ENCODE measurements at regions of chr19 and their contacts with region 1.

Region 1: GRCh38 chr19:55088543-55089341 is 13.1 kb downstream of the EPS8L1 start:
- DNase-seq: no peak
- ATAC-seq: peak in 1 of 2 donors; percentile 29
- H3K4me3 ChIP-seq: no peak overlapping the region
- H3K27ac ChIP-seq: peak overlapping the region in 3 of 4 donors; percentile 16 to 33 (median 18)
- H3K4me1 ChIP-seq: peaks cover 13 to 24% of the 10 kb centered on the region in 2 donors
- H3K27me3 ChIP-seq: peaks cover 36 to 39% (median 39%) of the 10 kb centered on the region in 3 donors
- CTCF ChIP-seq: peak; percentile 18 to 89 (median 52)
- POLR2A ChIP-seq: no peak

Region 2: DNA sequence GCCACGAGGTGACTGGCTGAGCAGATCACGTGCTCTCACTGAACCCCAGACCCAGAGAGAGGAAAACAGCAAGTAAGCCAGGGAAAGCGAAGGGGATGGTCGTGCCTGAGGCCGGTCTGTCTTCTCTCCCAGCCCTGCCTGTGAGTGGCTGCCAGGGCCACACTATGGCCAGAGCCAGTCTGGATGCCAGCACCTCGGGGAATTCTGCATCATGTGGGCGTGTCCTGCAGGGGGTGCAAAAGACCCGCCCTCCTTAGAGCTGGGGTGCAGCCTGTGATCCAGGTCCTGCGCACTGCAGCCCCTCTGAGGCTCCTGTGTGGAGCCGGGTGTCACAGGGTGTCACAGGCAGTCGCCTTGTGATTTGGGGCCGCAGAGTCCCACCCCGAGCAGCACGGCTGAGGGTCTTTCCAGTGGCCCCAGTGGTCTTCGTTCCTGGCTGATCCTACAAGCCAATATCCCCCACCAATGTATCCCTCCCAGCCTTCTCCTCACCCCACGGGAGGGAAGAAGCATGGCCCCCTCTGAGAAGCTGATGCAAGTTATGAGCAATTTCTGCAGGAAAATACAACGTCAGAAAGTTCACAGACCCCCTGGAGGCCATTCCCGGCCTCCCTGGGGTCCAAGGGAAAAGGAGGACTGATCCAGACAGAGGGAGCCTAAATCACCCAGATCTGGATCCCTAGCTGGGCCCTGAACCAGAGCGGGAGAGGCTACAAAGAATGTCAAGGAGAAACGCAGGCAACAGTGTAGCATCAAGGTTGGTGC is 21.0 kb after region 1 on chr19:
- in situ Hi-C with region 1: no loop called
- intact Hi-C with region 1: no loop called
- DNase-seq: no peak
- ATAC-seq: no peak
- H3K4me3 ChIP-seq: no peak overlapping the region
- H3K27ac ChIP-seq: no peak overlapping the region
- H3K4me1 ChIP-seq: peaks cover 13 to 24% of the 10 kb centered on the region in 2 donors
- H3K27me3 ChIP-seq: no peaks in the 10 kb centered on the region
- CTCF ChIP-seq: no peak
- POLR2A ChIP-seq: no peak

Region 3: GRCh38 chr19:55141696-55142095 is 53.0 kb after region 1 on chr19:
- in situ Hi-C with region 1: no loop called
- intact Hi-C with region 1: no loop called
- DNase-seq: no peak
- ATAC-seq: no peak
- H3K4me3 ChIP-seq: no peak overlapping the region
- H3K27ac ChIP-seq: peak overlapping the region; percentile 52 to 96 (median 83)
- H3K4me1 ChIP-seq: peaks cover 2 to 34% of the 10 kb centered on the region in 2 donors
- H3K27me3 ChIP-seq: peaks cover 9 to 26% (median 23%) of the 10 kb centered on the region in 3 donors
- CTCF ChIP-seq: no peak
- POLR2A ChIP-seq: no peak

Region 4: DNA sequence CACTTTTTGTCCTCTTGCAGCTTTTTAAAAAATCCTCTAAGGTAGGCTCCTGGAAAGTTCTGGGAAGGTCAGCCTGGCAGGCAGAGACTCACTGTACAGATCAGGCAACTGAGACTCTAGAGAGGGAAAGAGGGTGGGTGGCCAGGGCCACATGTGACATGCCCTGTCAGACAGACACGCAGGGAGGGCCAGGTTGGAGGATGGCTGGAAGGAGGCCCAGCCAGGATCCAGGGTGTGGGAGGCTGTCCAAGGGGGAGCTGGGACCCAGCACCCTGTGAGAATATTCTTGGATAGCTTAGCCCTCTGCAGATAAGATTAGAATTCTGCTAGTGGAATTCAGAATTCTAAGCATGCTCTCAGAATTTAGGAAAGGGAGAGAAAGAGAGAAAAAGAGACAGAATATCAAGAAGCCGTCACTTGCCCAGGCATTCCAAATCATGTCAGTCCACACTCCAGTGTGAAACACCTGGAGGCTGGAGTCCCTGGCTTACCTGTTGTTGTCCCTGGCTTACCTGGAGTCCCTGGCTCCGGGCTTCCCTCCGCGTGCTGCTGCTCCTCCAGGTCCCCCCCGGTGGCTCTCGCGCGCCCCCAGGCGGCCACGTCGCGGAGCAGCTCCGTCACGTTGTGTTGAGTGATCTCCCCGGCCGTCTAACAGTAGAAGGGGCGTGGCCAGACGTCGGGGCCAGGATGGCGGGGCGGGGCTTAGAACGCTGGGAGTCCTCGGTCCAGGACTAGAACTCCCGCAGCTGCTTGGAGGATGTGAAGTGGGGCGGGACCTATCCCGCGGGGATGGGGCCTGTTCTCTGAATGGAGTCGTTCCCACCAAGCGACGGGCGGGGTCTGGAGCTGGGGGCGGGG is 71.6 kb after region 1 on chr19:
- in situ Hi-C with region 1: loop called in 1 of 4 experiments (anchors 10 kb)
- intact Hi-C with region 1: loop called (anchors 1 kb)
- DNase-seq: peak; percentile 57 to 89
- ATAC-seq: peak; percentile 77 to 79
- H3K4me3 ChIP-seq: no peak overlapping the region
- H3K27ac ChIP-seq: peak overlapping the region in 1 of 4 donors; percentile 73
- H3K4me1 ChIP-seq: peaks cover 0 to 18% of the 10 kb centered on the region in 2 donors
- H3K27me3 ChIP-seq: peaks cover 27 to 29% (median 29%) of the 10 kb centered on the region in 3 donors
- CTCF ChIP-seq: peak; percentile 70 to 91 (median 89)
- POLR2A ChIP-seq: no peak

Region 5: GRCh38 chr19:55166530-55167268 is 78.0 kb after region 1 on chr19 and contains the start of gene DNAAF3:
- in situ Hi-C with region 1: loop called in 1 of 4 experiments (anchors 10 kb)
- intact Hi-C with region 1: no loop called
- DNase-seq: peak; percentile 93 to 95
- ATAC-seq: peak; percentile 99 to 100
- H3K4me3 ChIP-seq: peak within 1 kb of the TSS; percentile 55 to 65 (median 59)
- H3K27ac ChIP-seq: peak within 1 kb of the TSS in 1 of 4 donors; percentile 30
- H3K4me1 ChIP-seq: peaks cover 3 to 5% of the 10 kb centered on the region in 2 donors
- H3K27me3 ChIP-seq: peaks cover 49 to 58% (median 52%) of the 10 kb centered on the region in 3 donors
- CTCF ChIP-seq: peak in 1 of 5 experiments; percentile 14
- POLR2A ChIP-seq: no peak
- total RNA-seq, gene DNAAF3: 0.39 TPM in 1 of 4 donors, not detected in the others

Measured in gastrocnemius medialis (tissue), 4 donors.